ENCODE measurements at regions of chr21 and their contacts with region 1.

Region 1: GRCh38 chr21:28745131-28746016 is 247.3 kb downstream of the LTN1 start:
- DNase-seq: peak; percentile 69
- H3K4me3 ChIP-seq: peak overlapping the region; percentile 51
- CTCF ChIP-seq: peak; percentile 69

Region 2: GRCh38 chr21:26850108-26850643 is 1895.2 kb before region 1 on chr21:
- CTCF ChIA-PET with region 1: interaction called, 106 read pairs
- POLR2A ChIA-PET with region 1: interaction called, 12 read pairs
- DNase-seq: no peak
- H3K4me3 ChIP-seq: no peak overlapping the region
- CTCF ChIP-seq: peak; percentile 29

Region 3: GRCh38 chr21:28066076-28066475 is 679.3 kb before region 1 on chr21:
- CTCF ChIA-PET with region 1: interaction called, 21 read pairs
- POLR2A ChIA-PET with region 1: no interaction called
- DNase-seq: no peak
- H3K4me3 ChIP-seq: no peak overlapping the region
- CTCF ChIP-seq: no peak

Region 4: DNA sequence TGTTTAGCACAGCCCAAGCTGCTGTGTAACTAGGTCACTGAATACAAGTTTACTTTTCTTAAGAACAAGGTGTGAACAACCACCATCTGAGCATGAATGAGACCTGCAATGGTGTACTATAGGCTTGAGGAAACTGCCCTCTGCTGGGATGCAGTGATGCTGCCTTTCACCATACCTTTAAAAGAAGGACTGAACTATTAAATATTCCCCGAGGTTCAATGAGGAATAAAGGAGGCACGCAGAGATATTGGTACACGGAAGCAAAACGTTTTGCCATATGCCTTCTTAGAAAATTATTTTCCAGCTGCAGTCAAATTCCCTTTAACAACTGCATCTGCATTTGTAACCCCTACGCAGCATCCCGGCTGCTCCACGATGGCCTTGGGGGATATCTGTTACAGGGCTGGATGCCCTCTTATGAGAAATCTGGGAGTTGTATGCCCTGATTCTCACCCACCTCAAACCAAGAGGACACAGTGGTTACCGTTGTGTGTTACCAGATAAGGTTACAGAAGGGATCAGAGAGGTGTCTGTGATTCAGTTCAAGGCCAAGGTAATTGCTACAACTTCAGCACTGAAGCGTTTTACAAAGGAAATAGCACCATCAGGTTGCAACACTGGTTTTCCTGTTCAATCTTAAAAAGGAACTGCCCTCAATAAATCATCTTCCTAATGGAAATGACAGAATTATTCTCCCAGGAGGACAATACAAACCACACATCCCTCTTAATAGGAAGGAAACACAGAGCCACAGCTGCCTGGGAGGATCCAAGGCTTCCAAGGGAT is 223.2 kb before region 1 on chr21:
- CTCF ChIA-PET with region 1: interaction called, 19 read pairs
- POLR2A ChIA-PET with region 1: no interaction called
- DNase-seq: no peak
- H3K4me3 ChIP-seq: no peak overlapping the region
- CTCF ChIP-seq: peak; percentile 75

Region 5: DNA sequence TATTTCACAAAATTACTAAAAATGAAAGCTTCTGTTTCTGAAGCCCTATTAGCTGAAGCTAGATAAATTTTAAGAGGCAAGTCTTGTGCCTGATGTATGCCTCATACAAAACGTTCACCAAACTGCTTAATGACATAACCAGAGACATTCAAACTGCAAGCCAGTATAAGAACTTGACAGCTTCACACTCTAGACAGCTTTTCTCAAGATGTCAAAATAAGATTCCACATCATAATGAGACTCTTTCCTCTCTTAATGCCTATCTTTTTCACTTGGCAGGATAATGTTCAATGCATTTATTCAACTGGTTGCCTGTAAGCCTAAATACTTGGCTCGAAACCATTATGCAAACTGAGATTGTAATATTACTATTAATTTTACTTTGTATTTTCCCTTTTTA is 176.7 kb before region 1 on chr21:
- CTCF ChIA-PET with region 1: no interaction called
- POLR2A ChIA-PET with region 1: no interaction called
- DNase-seq: no peak
- H3K4me3 ChIP-seq: no peak overlapping the region
- CTCF ChIP-seq: no peak

Region 6: DNA sequence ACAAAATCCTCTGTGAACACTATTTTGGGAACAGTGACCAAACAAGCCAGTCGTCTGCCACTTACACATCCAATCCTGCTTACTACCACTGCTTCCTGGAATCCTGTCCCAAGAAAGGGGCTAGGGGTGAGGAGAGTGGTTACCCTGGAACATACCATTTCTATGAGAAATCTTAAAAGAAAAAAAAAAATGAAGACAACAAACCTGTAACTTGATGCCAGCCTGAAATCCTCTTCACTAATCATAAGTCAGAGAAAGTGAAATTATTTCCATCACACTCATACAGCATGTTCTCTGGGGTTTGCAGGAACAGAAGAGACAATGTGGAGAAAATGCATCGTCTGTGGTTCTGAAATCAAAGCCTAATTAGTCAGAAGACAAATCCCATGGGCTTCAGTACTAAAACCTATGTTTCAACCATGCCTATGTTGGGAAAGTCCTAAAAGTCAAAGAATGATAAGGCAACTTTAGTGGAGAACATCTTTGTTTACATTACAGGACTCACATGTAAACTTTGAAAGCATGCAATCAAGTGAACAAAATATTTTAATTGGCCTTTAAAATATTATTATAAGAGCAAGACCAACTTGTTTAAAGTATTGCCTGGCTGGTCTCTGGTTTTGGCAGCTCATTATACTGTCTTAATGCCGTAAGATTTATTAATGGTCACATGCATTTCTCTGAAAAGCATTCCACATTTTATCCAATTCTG is 26.6 kb after region 1 on chr21:
- CTCF ChIA-PET with region 1: interaction called, 11 read pairs
- POLR2A ChIA-PET with region 1: interaction called, 3 read pairs
- DNase-seq: peak; percentile 90
- H3K4me3 ChIP-seq: no peak overlapping the region
- CTCF ChIP-seq: no peak

Region 7: GRCh38 chr21:28928578-28929420 is 183.4 kb after region 1 on chr21:
- CTCF ChIA-PET with region 1: interaction called, 11 read pairs
- POLR2A ChIA-PET with region 1: no interaction called
- DNase-seq: no peak
- H3K4me3 ChIP-seq: no peak overlapping the region
- CTCF ChIP-seq: no peak

Measured in AG04449 (cell line).